ENCODE measurements at regions of chr2 and their contacts with region 1.

Region 1: GRCh38 chr2:165778653-165779451 is 15.2 kb downstream of the GALNT3 start:
- DNase-seq: peak; percentile 41
- ATAC-seq: peak; percentile 95
- H3K4me3 ChIP-seq: no peak overlapping the region
- H3K27ac ChIP-seq: no peak overlapping the region
- H3K4me1 ChIP-seq: no peaks in the 10 kb centered on the region
- H3K27me3 ChIP-seq: no peaks in the 10 kb centered on the region
- CTCF ChIP-seq: peak; percentile 89
- EP300 ChIP-seq: no peak
- POLR2A ChIP-seq: no peak
- RAD21 ChIP-seq: peak; percentile 53; the same call in 1 of the 2 replicates

Region 2: GRCh38 chr2:165239230-165239629 is 539.6 kb before region 1 on chr2 and contains the start of gene SCN2A:
- CTCF ChIA-PET with region 1: interaction called, 4 read pairs
- POLR2A ChIA-PET with region 1: no interaction called
- in situ Hi-C with region 1: no loop called
- intact Hi-C with region 1: loop called (anchors 2 kb)
- DNase-seq: peak; percentile 54
- ATAC-seq: peak; percentile 62
- H3K4me3 ChIP-seq: no peak within 1 kb of the TSS
- H3K27ac ChIP-seq: no peak within 1 kb of the TSS
- H3K4me1 ChIP-seq: no peaks in the 10 kb centered on the region
- H3K27me3 ChIP-seq: no peaks in the 10 kb centered on the region
- CTCF ChIP-seq: peak; percentile 76
- EP300 ChIP-seq: no peak
- POLR2A ChIP-seq: no peak
- RAD21 ChIP-seq: peak; percentile 39; the same call in 1 of the 2 replicates
- total RNA-seq, gene SCN2A: 0.17 and 0.20 TPM in 2 replicates

Region 3: GRCh38 chr2:165401285-165401852 is 377.5 kb before region 1 on chr2:
- CTCF ChIA-PET with region 1: interaction called, 14 read pairs
- POLR2A ChIA-PET with region 1: no interaction called
- in situ Hi-C with region 1: loop called (anchors 5 kb)
- intact Hi-C with region 1: loop called (anchors 1 kb)
- DNase-seq: peak; percentile 67
- ATAC-seq: peak; percentile 70; the same call in 2 of the 3 replicates
- H3K4me3 ChIP-seq: no peak overlapping the region
- H3K27ac ChIP-seq: no peak overlapping the region
- H3K4me1 ChIP-seq: peaks cover 5% of the 10 kb centered on the region; the same call in 1 of the 2 replicates
- H3K27me3 ChIP-seq: no peaks in the 10 kb centered on the region
- CTCF ChIP-seq: peak; percentile 82
- EP300 ChIP-seq: no peak
- POLR2A ChIP-seq: no peak
- RAD21 ChIP-seq: peak; percentile 49; the same call in 1 of the 2 replicates

Region 4: GRCh38 chr2:165417009-165417408 is 361.8 kb before region 1 on chr2:
- CTCF ChIA-PET with region 1: no interaction called
- POLR2A ChIA-PET with region 1: no interaction called
- in situ Hi-C with region 1: no loop called
- intact Hi-C with region 1: loop called (anchors 5 kb)
- DNase-seq: no peak
- ATAC-seq: peak; percentile 67
- H3K4me3 ChIP-seq: no peak overlapping the region
- H3K27ac ChIP-seq: no peak overlapping the region
- H3K4me1 ChIP-seq: no peaks in the 10 kb centered on the region
- H3K27me3 ChIP-seq: no peaks in the 10 kb centered on the region
- CTCF ChIP-seq: peak; percentile 31; the same call in 1 of the 2 replicates
- EP300 ChIP-seq: no peak
- POLR2A ChIP-seq: no peak
- RAD21 ChIP-seq: no peak

Region 5: GRCh38 chr2:165573534-165574461 is 205.1 kb before region 1 on chr2:
- CTCF ChIA-PET with region 1: no interaction called
- POLR2A ChIA-PET with region 1: no interaction called
- in situ Hi-C with region 1: no loop called
- intact Hi-C with region 1: loop called (anchors 5 kb)
- DNase-seq: peak; percentile 78
- ATAC-seq: peak; percentile 100
- H3K4me3 ChIP-seq: peak overlapping the region in 2 of 3 experiments; percentile 2 to 42; a peak in 4 of 6 replicates
- H3K27ac ChIP-seq: no peak overlapping the region
- H3K4me1 ChIP-seq: peaks cover 14% of the 10 kb centered on the region
- H3K27me3 ChIP-seq: no peaks in the 10 kb centered on the region
- CTCF ChIP-seq: no peak
- EP300 ChIP-seq: no peak
- POLR2A ChIP-seq: no peak
- RAD21 ChIP-seq: no peak

Region 6: GRCh38 chr2:165698444-165698894 is 80.4 kb before region 1 on chr2:
- CTCF ChIA-PET with region 1: no interaction called
- POLR2A ChIA-PET with region 1: no interaction called
- in situ Hi-C with region 1: no loop called
- intact Hi-C with region 1: loop called (anchors 1 kb)
- DNase-seq: peak; percentile 44
- ATAC-seq: peak; percentile 95
- H3K4me3 ChIP-seq: no peak overlapping the region
- H3K27ac ChIP-seq: no peak overlapping the region
- H3K4me1 ChIP-seq: no peaks in the 10 kb centered on the region
- H3K27me3 ChIP-seq: 0 out of 5 replicates have a peak, but pooled peaks cover 0 to 2% of the 10 kb centered on the region in 2 experiments
- CTCF ChIP-seq: peak; percentile 61
- EP300 ChIP-seq: no peak
- POLR2A ChIP-seq: no peak
- RAD21 ChIP-seq: no peak